ENCODE measurements at regions of chrX and their contacts with region 1.

Region 1: DNA sequence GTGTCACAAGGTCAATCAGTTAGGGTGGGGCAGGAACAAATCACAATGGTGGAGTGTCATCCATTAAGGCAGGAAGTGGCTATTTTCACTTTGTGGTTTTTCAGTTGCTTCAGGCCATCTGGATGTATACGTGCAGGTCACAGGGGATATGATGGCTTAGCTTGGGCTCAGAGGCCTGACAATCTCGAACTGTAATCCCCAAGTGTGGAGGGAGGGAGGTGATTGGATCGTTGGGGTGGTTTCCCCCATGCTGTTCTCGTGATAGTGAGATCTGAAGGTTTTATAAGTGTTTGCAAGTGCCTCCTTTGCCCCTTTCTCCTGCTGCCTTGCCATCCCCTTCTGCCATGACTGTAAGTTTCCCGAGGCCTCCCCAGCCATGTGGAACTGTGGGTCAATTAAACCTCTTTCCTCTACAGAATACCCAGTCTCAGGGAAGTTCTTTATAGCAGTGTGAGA is 36.7 kb upstream of the STS start:
- DNase-seq: peak; percentile 73
- ATAC-seq: peak; percentile 84
- H3K4me3 ChIP-seq: no peak overlapping the region
- H3K27ac ChIP-seq: peak overlapping the region; percentile 99
- H3K4me1 ChIP-seq: peaks cover 68% of the 10 kb centered on the region
- H3K27me3 ChIP-seq: no peaks in the 10 kb centered on the region
- CTCF ChIP-seq: no peak
- EP300 ChIP-seq: peak; percentile 51 to 77; a peak in 3 of 4 replicates
- POLR2A ChIP-seq: peak; percentile 61
- RAD21 ChIP-seq: no peak

Region 2: GRCh38 chrX:6738518-6739470 is 372.1 kb before region 1 on chrX:
- CTCF ChIA-PET with region 1: no interaction called
- POLR2A ChIA-PET with region 1: no interaction called
- RAD21 ChIA-PET with region 1: interaction called, 17 read pairs
- SMC1A ChIA-PET with region 1: interaction called, 7 read pairs
- in situ Hi-C with region 1: no loop called
- intact Hi-C with region 1: loop called (anchors 2 kb)
- DNase-seq: peak; percentile 93
- ATAC-seq: peak; percentile 98
- H3K4me3 ChIP-seq: no peak overlapping the region
- H3K27ac ChIP-seq: peak overlapping the region; percentile 88
- H3K4me1 ChIP-seq: peaks cover 15% of the 10 kb centered on the region
- H3K27me3 ChIP-seq: no peaks in the 10 kb centered on the region
- CTCF ChIP-seq: no peak
- EP300 ChIP-seq: peak; percentile 96 to 98
- POLR2A ChIP-seq: no peak
- RAD21 ChIP-seq: no peak; the same call in 1 of the 2 replicates

Region 3: DNA sequence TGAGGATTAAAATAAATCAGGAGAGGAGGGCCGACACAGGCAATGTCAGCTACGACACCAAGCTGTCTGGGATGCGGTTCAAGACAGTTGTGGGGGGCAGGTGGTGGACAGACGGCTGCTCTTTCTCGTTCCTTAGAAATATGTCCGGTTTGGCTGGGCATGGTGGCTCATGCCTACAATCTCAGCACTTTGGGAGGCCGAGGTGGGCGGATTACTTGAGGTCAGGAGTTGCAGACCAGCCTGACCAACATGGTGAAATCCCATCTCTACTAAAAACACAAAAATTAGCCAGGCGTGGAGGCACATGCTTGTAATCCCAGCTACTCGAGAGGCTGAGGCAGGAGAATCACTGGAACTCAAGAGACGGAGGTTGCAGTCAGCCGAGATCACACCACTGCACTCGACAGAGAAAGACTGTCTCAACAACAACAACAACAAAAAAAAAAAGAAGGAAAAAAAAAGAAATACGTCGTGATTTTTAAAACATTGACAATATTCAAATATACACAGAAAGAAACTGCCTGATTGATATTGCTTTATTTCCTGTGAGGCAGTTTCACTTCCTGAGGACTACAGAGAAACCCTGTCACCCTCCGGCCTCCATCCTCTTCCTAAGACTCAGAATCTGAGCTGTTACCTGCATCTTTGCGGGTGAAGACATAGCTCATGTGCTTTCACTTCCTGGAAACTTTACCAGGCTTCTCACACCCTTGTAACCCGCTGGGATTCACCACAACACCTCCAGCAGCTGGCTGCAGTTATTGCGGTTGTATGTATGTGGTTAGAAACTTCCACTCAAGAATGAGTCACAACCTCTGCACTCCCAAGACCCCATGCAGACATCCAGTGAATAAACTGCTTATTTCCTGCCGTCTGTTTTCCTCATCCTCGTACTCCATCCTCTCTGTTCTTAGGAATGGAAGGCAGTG is 27.1 kb before region 1 on chrX:
- CTCF ChIA-PET with region 1: interaction called, 34 read pairs
- POLR2A ChIA-PET with region 1: interaction called, 28 read pairs
- RAD21 ChIA-PET with region 1: interaction called, 77 read pairs
- SMC1A ChIA-PET with region 1: interaction called, 80 read pairs
- in situ Hi-C with region 1: no loop called
- intact Hi-C with region 1: loop called (anchors 1 kb)
- DNase-seq: peak; percentile 84
- ATAC-seq: peak; percentile 85
- H3K4me3 ChIP-seq: no peak overlapping the region; the same call in 1 of the 2 replicates
- H3K27ac ChIP-seq: peak overlapping the region; percentile 46
- H3K4me1 ChIP-seq: peaks cover 45% of the 10 kb centered on the region
- H3K27me3 ChIP-seq: no peaks in the 10 kb centered on the region
- CTCF ChIP-seq: no peak
- EP300 ChIP-seq: peak; percentile 94
- POLR2A ChIP-seq: no peak
- RAD21 ChIP-seq: no peak

Region 4: DNA sequence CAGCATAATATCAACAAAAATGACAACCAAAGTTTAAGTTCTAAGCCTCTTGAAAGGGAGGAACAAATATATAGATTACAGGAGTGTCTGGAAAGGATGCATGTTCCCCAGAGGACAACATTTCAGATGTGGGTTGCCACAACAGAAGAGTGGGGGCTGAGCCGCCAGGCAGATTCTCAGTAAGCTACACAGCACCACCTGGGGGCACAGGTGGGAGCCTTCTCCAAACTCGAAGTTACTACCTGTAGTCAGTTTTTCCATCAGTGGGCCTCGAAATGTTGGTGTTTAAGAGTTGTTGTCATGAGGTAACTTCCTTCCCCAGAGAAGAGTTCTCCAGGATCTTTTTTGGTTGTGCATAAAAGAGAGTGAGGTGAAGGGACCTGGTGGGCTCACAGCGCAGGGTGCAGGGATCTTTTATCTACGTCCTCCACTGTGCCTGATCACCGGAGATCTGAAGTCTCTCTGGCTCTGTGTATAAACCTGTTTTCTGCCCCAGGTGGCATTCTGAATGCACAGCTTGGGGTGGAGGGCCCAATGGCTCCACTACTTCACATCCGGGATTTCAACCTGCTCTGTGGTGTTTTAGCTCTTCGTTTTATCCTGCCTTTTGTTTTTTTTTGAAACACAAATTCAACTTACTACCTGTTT is 21.8 kb before region 1 on chrX:
- CTCF ChIA-PET with region 1: interaction called, 34 read pairs
- POLR2A ChIA-PET with region 1: interaction called, 28 read pairs
- RAD21 ChIA-PET with region 1: interaction called, 77 read pairs
- SMC1A ChIA-PET with region 1: interaction called, 80 read pairs
- in situ Hi-C with region 1: no loop called
- intact Hi-C with region 1: loop called (anchors 1 kb)
- DNase-seq: no peak
- ATAC-seq: peak; percentile 57
- H3K4me3 ChIP-seq: no peak overlapping the region
- H3K27ac ChIP-seq: peak overlapping the region; percentile 42; the same call in 1 of the 2 replicates
- H3K4me1 ChIP-seq: peaks cover 48% of the 10 kb centered on the region
- H3K27me3 ChIP-seq: no peaks in the 10 kb centered on the region
- CTCF ChIP-seq: peak; percentile 51 to 61 (median 59)
- EP300 ChIP-seq: no peak
- POLR2A ChIP-seq: no peak
- RAD21 ChIP-seq: peak; percentile 78

Region 5: DNA sequence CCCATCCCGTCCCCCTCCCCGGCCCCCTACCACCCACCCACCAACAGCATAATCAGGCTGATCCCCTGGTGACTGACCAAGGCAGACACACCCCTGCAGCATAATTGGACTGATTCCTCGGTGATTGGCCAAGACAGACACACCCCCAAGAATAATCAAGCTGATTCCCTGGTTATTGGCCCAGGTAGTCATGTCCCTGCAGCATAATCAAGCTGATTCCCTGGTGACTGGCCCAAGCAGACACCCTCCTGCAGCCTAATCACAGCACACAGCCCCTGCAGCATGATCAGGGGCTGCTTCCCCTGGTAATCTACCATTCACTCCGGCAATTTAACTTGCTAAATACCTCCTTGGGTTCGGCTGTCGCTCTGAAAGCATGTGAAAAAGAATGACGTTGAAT is 10.8 kb before region 1 on chrX:
- CTCF ChIA-PET with region 1: interaction called, 5 read pairs
- POLR2A ChIA-PET with region 1: interaction called, 4 read pairs
- RAD21 ChIA-PET with region 1: interaction called, 4 read pairs
- SMC1A ChIA-PET with region 1: interaction called, 15 read pairs
- in situ Hi-C with region 1: no loop called
- intact Hi-C with region 1: no loop called
- DNase-seq: no peak
- ATAC-seq: no peak
- H3K4me3 ChIP-seq: no peak overlapping the region
- H3K27ac ChIP-seq: no peak overlapping the region
- H3K4me1 ChIP-seq: peaks cover 6% of the 10 kb centered on the region; the same call in 1 of the 2 replicates
- H3K27me3 ChIP-seq: no peaks in the 10 kb centered on the region
- CTCF ChIP-seq: no peak
- EP300 ChIP-seq: no peak
- POLR2A ChIP-seq: no peak
- RAD21 ChIP-seq: no peak

Region 6: DNA sequence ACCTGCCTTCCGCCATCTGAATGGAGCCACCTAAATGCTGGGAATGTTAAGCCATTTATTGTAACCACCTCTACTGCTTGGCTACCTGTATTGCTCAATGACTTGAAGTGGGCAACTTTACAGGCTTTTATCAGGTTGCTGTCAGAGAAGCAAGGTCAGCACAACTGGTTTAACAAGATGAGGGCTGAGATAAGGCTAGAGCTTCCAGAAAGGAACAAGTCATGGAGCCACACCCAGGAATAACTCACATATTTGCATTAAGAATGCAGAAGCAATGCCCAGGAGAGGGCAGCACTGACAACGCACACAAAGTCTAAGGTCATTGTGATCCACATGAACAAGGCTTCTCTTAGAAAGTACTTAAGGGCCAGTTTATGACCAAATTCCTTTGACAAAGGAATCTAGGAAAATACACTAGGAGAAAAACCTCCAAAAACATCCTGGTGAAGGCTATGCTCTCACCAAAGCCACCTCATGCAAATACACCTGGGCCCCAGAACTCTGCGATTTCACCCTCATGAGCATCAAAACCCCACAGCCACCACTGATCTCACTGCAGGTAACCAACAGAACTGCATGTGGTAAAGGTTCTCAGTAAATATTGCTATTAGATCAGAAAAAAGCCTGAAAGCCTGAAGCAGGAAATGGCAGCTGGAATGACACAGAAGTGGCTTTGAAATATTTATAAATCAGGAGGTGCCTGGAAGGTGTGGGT is 21.6 kb after region 1 on chrX:
- CTCF ChIA-PET with region 1: interaction called, 15 read pairs
- POLR2A ChIA-PET with region 1: interaction called, 6 read pairs
- RAD21 ChIA-PET with region 1: interaction called, 8 read pairs
- SMC1A ChIA-PET with region 1: interaction called, 14 read pairs
- in situ Hi-C with region 1: no loop called
- intact Hi-C with region 1: loop called (anchors 2 kb)
- DNase-seq: no peak
- ATAC-seq: peak; percentile 93
- H3K4me3 ChIP-seq: no peak overlapping the region
- H3K27ac ChIP-seq: peak overlapping the region; percentile 30
- H3K4me1 ChIP-seq: peaks cover 12% of the 10 kb centered on the region
- H3K27me3 ChIP-seq: no peaks in the 10 kb centered on the region
- CTCF ChIP-seq: peak; percentile 55 to 60 (median 56)
- EP300 ChIP-seq: no peak
- POLR2A ChIP-seq: no peak
- RAD21 ChIP-seq: peak; percentile 66

Region 7: DNA sequence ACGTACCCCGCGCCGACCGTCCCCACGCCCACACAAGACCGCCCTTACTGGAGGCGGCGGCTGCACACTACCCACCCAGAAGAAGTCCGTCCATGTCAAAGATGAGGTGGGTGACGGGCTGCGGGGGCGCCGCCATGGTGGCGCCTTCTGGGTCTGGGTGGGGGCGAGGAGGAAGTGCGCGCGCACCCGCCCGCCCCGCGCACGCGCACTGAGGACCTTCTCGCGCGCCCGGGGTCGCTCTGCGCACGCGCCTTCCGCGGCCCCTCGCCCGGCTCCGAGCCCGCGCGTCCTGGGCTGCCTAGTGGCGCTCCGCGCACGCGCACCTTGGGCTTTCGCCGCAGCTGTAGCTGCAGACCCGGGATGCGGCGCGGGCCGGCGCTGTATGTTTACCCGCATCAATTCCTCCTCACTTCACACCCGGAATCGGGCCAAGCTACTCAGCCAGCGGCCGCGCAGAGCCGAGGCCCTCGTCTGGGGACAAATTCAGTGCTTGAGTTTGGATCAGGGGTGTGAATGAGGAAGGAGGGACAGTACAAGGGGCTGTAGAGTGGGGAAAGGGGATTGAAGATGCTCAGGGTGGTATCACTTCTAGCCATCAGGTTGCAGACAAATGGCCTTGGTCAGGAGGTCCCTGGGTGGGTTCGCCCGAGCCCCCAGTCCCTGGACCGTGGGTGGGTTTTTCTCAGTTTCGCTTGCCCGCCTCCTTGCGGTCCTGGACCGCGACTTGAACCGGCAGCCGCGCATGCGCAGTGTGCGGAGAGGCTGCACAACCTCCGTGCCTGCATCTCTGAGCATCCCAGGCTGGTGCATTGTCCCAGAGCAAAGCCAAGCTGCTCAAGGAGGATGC is 37.4 kb after region 1 on chrX and contains the start of gene PUDP:
- CTCF ChIA-PET with region 1: interaction called, 24 read pairs
- POLR2A ChIA-PET with region 1: interaction called, 117 read pairs
- RAD21 ChIA-PET with region 1: interaction called, 127 read pairs
- SMC1A ChIA-PET with region 1: interaction called, 55 read pairs
- in situ Hi-C with region 1: no loop called
- intact Hi-C with region 1: loop called (anchors 1 kb)
- DNase-seq: no peak
- ATAC-seq: peak; percentile 86
- H3K4me3 ChIP-seq: peak within 1 kb of the TSS; percentile 98
- H3K27ac ChIP-seq: peak within 1 kb of the TSS; percentile 87
- H3K4me1 ChIP-seq: peaks cover 15% of the 10 kb centered on the region
- H3K27me3 ChIP-seq: no peaks in the 10 kb centered on the region
- CTCF ChIP-seq: peak in 2 of 3 experiments; percentile 25; a peak in 3 of 6 replicates
- EP300 ChIP-seq: no peak
- POLR2A ChIP-seq: peak; percentile 78
- RAD21 ChIP-seq: peak; percentile 9; the same call in 1 of the 2 replicates
- polyA plus RNA-seq, gene PUDP: 68.9 to 83.5 TPM

Region 8: DNA sequence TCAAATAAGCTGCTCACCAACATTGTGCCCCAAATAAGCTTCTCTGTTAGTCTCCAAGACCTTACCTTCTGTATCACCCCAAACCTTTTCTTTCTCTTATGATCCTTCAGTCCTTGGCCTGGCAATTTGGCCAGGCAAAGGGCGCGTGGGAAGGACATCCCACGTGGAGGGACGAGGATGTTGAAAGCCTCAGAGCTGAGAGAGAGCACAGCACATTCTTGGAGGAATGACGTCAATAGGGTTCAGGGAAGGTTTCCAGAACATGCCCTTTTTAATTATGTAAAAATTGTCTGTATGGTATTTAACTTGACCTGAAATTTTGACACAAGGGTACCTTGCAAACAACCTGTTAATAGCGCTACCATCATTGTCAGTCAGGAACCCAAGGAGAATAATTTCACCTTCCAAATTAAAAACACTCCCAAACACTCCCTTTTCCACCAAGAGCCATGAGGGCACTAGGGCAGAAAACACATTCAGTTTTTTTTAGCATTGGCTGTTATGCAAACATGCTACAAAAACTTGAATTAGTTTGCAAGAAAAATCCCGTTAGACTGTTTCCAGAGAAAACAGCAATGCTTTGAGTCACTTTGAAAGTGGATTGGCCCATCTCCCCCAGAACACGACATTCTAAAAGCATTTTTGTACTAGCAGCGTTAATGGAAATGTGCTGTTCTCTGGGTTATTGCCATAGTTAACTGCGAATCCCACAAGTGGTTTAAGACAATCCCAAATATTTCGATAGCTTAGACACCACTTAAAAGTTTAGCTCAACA is 220.3 kb after region 1 on chrX:
- CTCF ChIA-PET with region 1: no interaction called
- POLR2A ChIA-PET with region 1: no interaction called
- RAD21 ChIA-PET with region 1: no interaction called
- SMC1A ChIA-PET with region 1: no interaction called
- in situ Hi-C with region 1: no loop called
- intact Hi-C with region 1: no loop called
- DNase-seq: no peak
- ATAC-seq: no peak
- H3K4me3 ChIP-seq: no peak overlapping the region
- H3K27ac ChIP-seq: no peak overlapping the region
- H3K4me1 ChIP-seq: no peaks in the 10 kb centered on the region
- H3K27me3 ChIP-seq: no peaks in the 10 kb centered on the region
- CTCF ChIP-seq: no peak
- EP300 ChIP-seq: no peak
- POLR2A ChIP-seq: no peak
- RAD21 ChIP-seq: no peak

Measured in GM12878 (cell line).